ENCODE measurements at regions of chr2 and their contacts with region 1.

Region 1: GRCh38 chr2:38352336-38352735 is 24.7 kb downstream of the ATL2 start:
- DNase-seq: no peak
- ATAC-seq: no peak
- H3K4me3 Mint-ChIP-seq: no peak overlapping the region
- H3K27ac Mint-ChIP-seq: peak overlapping the region; percentile 64
- H3K4me1 Mint-ChIP-seq: peaks cover 12% of the 10 kb centered on the region
- H3K27me3 Mint-ChIP-seq: no peaks in the 10 kb centered on the region
- CTCF ChIP-seq: no peak

Region 2: DNA sequence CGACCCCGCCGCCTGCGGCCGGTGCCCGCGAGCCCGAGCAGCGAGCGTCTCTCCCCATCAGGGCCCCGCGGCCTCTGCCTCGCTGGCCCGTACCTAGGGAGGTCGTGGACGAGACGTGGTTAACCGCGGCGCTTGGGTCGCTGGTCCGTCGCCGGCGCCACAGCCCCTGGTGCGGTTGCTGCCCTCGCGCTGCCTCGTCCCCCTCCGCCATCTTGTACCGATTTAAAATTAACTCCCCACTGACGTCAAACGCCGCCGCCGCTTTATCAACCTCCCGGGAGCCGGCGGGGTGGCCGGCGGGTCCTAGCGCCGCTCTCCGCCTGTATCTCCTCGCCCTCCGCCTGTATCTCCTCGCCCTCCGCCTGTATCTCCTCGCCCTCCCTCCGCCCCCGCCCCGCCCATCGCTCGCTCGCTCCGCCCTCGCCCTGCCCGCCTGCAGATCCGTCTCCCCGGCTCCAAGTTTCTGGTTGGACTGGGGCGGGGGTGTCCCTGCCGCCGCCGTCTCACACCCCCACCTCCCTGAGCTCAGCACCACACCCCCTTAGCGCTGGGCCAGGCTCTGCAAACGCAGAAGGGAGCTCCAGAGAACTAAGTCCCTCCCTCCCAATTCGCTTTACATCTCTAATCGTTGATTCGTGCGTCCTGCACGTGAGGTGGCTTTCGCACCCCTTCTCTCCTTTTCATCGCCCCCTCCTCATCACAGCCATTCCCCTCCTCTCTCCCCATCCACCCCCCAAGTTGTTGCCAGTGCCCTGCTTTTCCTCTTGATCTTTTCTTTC is 24.9 kb after region 1 on chr2 and contains the start of gene ATL2:
- CTCF ChIA-PET with region 1: interaction called, 12 read pairs
- POLR2A ChIA-PET with region 1: no interaction called
- DNase-seq: peak; percentile 97
- ATAC-seq: peak; percentile 90
- H3K4me3 Mint-ChIP-seq: peak within 1 kb of the TSS; percentile 94
- H3K27ac Mint-ChIP-seq: peak within 1 kb of the TSS; percentile 100
- H3K4me1 Mint-ChIP-seq: peaks cover 44% of the 10 kb centered on the region
- H3K27me3 Mint-ChIP-seq: no peaks in the 10 kb centered on the region
- CTCF ChIP-seq: no peak
- total RNA-seq, gene ATL2: 81.3 to 90.5 TPM (median 88.7 TPM) in 3 replicates

Region 3: DNA sequence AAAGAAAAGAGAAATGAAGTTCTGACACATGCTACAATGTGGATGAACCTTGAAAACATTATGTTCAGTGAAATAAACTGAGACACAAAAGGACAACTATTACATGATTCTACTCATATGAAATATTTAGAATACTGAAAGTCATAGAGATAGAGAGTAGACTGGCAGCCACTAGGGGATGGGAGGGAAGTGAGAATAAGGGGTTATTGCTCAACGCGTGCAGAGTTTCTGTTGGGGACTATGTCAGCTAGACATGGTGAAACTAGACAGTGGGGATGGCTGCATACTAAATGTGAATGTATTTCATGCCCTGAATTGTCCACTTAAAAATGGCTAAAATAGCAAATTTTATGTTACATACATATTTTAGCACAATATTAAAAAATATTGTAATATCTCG is 133.4 kb after region 1 on chr2:
- CTCF ChIA-PET with region 1: no interaction called
- POLR2A ChIA-PET with region 1: no interaction called
- DNase-seq: no peak
- ATAC-seq: no peak
- H3K4me3 Mint-ChIP-seq: no peak overlapping the region
- H3K27ac Mint-ChIP-seq: no peak overlapping the region
- H3K4me1 Mint-ChIP-seq: peaks cover 13% of the 10 kb centered on the region
- H3K27me3 Mint-ChIP-seq: no peaks in the 10 kb centered on the region
- CTCF ChIP-seq: no peak